AG04449 (cell line): ENCODE measurements at regions of chrX and their contacts with region 1.

Region 1: DNA sequence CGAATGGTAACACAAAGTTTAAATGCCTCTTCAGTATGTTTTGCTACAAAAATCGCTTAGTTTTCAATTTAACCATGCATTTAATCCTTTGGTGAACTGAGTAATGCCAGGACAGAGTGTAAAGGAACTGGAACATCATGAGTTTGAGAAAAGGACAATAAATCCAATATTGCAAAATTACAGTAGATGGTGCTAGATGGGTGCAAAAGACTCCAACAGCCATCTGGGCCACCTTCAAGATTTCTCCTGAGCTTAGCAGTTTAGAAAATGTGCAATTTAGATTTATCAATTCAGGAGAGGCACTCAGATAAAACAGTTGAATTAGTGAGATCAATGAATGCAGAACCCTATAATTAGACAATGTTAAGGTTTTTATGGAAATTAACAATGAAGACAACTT is 33.2 kb upstream of the MID1IP1 start:
- DNase-seq: no peak
- H3K4me3 ChIP-seq: no peak overlapping the region
- CTCF ChIP-seq: no peak

Region 2: GRCh38 chrX:38868941-38869401 is 100.9 kb after region 1 on chrX:
- CTCF ChIA-PET with region 1: no interaction called
- POLR2A ChIA-PET with region 1: no interaction called
- DNase-seq: no peak
- H3K4me3 ChIP-seq: no peak overlapping the region
- CTCF ChIP-seq: no peak

Region 3: DNA sequence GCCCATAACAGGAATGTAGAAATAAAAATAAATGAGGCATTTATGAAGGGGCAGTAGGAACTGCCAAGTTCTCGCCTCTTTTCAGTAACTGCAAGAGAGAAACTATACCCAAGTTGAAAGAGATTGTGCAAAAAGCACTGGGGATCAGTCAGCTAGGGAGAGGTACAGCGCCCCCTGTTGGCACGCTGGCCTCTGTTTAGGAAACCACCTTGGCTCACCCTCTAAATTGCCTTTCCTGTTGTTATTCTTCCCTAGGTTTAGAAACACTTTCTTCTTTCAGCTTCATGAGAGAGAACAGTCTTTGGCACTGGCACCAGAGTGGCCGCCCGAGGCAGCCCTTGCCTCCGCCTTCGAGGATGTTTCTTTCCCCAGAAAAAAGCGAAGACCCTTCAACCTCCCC is 381.7 kb after region 1 on chrX:
- CTCF ChIA-PET with region 1: interaction called, 16 read pairs
- POLR2A ChIA-PET with region 1: no interaction called
- DNase-seq: no peak
- H3K4me3 ChIP-seq: no peak overlapping the region
- CTCF ChIP-seq: peak; percentile 63